Colonic mucosa (tissue), 4 donors: ENCODE measurements at regions of chr14 and their contacts with region 1.

Region 1: GRCh38 chr14:51780006-51780692 is 80.3 kb upstream of the GNG2 start:
- DNase-seq: peak; percentile 75
- H3K4me3 ChIP-seq: no peak overlapping the region
- H3K27ac ChIP-seq: no peak overlapping the region
- H3K4me1 ChIP-seq: no peaks in the 10 kb centered on the region
- H3K27me3 ChIP-seq: no peaks in the 10 kb centered on the region
- CTCF ChIP-seq: peak; percentile 85

Region 2: GRCh38 chr14:51369814-51370213 is 410.3 kb before region 1 on chr14:
- intact Hi-C with region 1: loop called (anchors 10 kb)
- DNase-seq: no peak
- H3K4me3 ChIP-seq: no peak overlapping the region
- H3K27ac ChIP-seq: no peak overlapping the region
- H3K4me1 ChIP-seq: no peaks in the 10 kb centered on the region
- H3K27me3 ChIP-seq: no peaks in the 10 kb centered on the region
- CTCF ChIP-seq: no peak

Region 3: DNA sequence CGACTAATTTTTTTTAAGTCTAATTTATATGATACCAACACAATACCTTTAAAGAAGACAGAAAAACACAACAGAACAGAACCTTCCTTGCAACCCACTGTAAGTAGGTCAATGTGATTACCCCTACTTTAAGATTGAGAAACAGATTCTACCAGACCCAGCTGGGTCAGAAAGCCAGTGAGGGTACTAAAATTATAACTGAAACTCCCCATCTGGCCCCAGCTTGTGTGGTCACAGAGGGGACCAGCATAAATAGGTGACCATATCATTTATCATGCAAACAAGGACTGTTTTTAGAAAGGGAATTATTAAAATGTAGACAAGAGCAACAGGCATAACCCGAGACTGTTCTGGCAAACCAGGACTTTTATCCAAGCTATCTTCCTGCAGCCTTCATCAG is 158.5 kb before region 1 on chr14:
- intact Hi-C with region 1: no loop called
- DNase-seq: no peak
- H3K4me3 ChIP-seq: no peak overlapping the region
- H3K27ac ChIP-seq: no peak overlapping the region
- H3K4me1 ChIP-seq: no peaks in the 10 kb centered on the region
- H3K27me3 ChIP-seq: no peaks in the 10 kb centered on the region
- CTCF ChIP-seq: no peak

Region 4: GRCh38 chr14:51979088-51979709 is 199.1 kb after region 1 on chr14:
- intact Hi-C with region 1: loop called (anchors 10 kb)
- DNase-seq: peak; percentile 89
- H3K4me3 ChIP-seq: no peak overlapping the region
- H3K27ac ChIP-seq: no peak overlapping the region
- H3K4me1 ChIP-seq: no peaks in the 10 kb centered on the region
- H3K27me3 ChIP-seq: no peaks in the 10 kb centered on the region
- CTCF ChIP-seq: peak; percentile 96